ENCODE measurements at regions of chr16 and their contacts with region 1.

Region 1: DNA sequence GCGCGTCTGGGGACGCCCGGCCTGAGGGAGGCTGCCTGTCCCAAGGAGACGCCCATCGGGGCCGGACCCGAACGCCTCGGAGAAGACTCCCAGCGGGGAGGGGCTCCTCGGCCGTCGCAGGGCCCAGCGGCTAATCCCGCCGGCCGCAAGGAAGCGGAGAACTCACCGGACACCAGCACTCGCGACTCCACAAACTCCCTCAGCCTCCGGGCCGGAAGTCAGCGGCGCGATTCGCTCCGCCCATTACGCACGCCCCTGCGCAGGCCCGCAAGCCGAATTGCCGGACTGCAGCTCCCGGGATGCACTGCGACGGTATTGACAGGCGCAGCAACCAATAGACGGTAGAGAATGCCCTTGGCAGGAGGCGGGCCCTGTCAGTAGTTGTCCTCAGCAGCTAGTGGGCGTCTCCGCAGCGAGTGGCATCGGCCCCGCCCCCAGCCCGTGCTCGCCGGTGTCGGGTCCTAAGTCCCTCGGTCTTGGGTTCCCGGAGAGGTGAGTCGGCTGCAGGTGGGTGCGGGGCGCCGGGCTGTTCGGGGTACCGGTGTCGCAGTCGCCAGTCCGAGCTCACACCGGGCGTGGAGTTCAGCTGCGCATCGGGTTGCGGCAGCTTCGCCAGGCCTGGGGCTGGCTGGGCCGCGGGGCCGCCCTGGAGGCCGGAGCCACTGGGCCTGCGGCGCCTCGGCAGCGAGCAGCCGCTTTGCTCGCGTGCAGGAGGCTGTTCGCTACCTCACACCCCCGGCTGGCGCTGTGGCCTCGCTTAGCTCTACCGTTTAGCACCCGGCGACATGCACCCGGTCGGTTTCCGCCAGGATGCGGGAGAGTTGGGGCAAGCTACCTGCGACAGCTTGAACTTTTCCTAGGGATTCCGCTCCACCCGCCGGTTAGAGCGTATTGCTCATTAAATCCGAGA is at the starts of genes ZNF174 and ZSCAN32:
- DNase-seq: peak; percentile 98 to 99 (median 99)
- ATAC-seq: peak; percentile 100
- H3K4me3 ChIP-seq: peak within 1 kb of the TSS; percentile 39 to 99 (median 90)
- H3K27ac ChIP-seq: peak within 1 kb of the TSS; percentile 22 to 93 (median 86)
- H3K4me1 ChIP-seq: peaks cover 0 to 33% (median 18%) of the 10 kb centered on the region in 12 donors
- H3K27me3 ChIP-seq: no peaks in the 10 kb centered on the region
- CTCF ChIP-seq: peak in 3 of 12 donors; percentile 13 to 44 (median 16)
- POLR2A ChIP-seq: peak in 1 of 2 donors; percentile 76
- total RNA-seq, gene ZNF174: 8.4 to 21.0 (median 10.6) TPM
- total RNA-seq, gene ZSCAN32: 5.4 to 9.5 (median 7.5) TPM

Region 2: DNA sequence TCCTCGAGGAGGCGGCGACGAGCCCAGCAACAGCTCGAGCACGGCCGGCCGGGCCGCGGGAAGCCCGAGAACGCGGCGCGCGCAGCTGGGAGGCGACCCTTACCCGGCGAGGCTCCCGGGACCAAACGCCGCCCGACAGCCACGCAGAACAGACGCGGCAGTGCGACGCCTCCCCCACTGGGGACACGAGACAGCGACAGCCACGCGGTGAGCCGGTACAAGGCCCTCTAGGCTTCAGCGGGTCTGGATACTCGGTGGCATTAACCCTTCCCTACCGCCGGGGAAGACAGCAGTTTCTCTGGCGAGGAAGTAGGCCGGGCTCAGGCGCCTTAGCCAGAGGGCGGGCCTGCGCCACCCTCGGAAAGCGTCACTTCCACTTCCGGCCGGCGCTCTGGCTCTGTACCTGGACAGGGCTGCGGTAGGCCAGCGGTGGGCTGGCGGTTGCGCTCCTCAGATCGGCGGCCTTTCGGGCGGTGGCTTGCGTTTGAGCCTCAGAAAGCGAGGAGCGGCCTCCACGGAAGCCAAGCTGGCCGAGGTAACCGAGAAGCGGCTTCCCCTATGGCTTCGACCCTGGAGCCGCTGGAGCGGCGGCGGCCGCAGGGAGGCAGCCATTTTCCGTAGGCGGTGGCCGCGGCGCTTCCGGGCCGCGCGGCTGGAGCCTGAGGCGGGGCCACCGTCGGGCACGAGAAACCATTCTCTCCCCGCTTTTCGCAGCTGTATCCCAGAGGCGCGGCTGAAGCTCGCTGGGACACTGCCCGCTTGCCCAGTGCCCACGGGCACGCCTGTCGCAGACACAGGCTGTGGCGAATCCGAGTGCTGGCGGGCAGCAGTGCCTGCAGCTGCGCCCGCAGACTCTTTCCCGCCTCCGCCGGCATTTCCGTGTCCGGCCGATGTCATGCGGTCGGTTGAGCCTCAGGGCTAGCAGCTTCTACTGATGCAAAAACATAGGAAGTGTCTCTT is 95.6 kb before region 1 on chr16 and contains the starts of genes TIGD7 and ZNF75A:
- intact Hi-C with region 1: loop called in 1 of 10 experiments (anchors 5 kb)
- DNase-seq: peak; percentile 89 to 93 (median 92)
- ATAC-seq: peak; percentile 98 to 100 (median 99)
- H3K4me3 ChIP-seq: peak within 1 kb of the TSS; percentile 52 to 92 (median 73)
- H3K27ac ChIP-seq: peak within 1 kb of the TSS; percentile 74 to 98 (median 94)
- H3K4me1 ChIP-seq: peaks cover 0 to 25% (median 18%) of the 10 kb centered on the region in 12 donors
- H3K27me3 ChIP-seq: no peaks in the 10 kb centered on the region
- CTCF ChIP-seq: peak in 7 of 12 donors; percentile 5 to 45 (median 23)
- POLR2A ChIP-seq: peak in 1 of 2 donors; percentile 80
- total RNA-seq, gene TIGD7: 4.6 to 10.4 (median 8.2) TPM
- total RNA-seq, gene ZNF75A: 13.3 to 27.3 (median 18.1) TPM

Region 3: GRCh38 chr16:3364774-3365427 is 36.1 kb before region 1 on chr16:
- intact Hi-C with region 1: loop called in 1 of 10 experiments (anchors 2 kb)
- DNase-seq: peak; percentile 87 to 97 (median 92)
- ATAC-seq: peak; percentile 99 to 100 (median 99)
- H3K4me3 ChIP-seq: peak overlapping the region; percentile 40 to 90 (median 62)
- H3K27ac ChIP-seq: peak overlapping the region; percentile 79 to 94 (median 88)
- H3K4me1 ChIP-seq: peaks cover 0 to 8% (median 0%) of the 10 kb centered on the region in 12 donors
- H3K27me3 ChIP-seq: peaks cover 0 to 9% (median 0%) of the 10 kb centered on the region in 9 donors
- CTCF ChIP-seq: no peak
- POLR2A ChIP-seq: peak in 1 of 2 donors; percentile 41

Region 4: DNA sequence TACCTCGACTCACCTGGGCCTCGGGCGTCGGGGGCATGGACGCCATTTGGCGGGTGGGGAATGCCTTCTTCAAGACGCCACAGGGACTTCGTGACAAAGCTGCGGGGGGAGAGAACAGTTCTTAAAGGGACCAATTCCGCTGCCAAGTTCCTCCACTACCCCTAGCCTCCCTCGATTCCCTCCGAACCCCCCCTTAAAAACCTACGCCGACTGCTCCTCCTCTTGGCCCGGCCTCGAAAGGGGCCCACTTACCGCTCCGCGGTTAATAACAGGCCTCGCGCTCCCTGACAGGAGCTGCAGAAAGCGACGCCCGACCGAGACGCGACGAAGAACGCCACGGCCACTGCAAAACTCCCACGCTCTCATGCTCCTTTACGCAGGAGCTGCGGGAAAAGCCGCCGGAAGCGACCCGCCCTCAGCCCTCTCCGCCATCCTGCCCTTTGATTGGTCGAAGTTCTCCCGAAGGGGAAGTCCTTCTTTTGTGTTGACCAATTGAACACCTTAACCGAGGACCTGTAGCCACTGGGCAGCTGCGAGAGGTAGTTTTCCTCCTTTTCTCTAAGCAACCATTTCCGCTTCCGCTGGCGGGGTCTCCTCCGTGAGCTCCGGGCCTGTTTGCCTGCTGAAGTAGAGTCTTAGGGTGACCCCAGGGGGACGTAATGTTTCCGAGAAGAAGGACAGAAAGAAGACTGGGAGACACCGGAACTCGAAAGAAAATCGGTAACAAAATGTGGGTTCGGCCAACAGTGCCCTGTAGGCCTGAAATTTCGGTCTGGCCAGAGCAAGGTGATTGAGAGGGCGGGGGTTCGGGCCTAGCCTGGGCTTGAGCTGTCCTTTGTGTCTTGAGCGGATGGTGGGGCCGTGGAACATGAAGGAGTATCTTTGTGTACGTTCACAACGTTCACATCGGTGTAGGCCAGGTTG is 42.3 kb after region 1 on chr16 and contains the starts of genes NAA60 and ZNF597:
- intact Hi-C with region 1: loop called in 2 of 10 experiments (anchors 2 to 5 kb)
- DNase-seq: peak; percentile 85 to 88 (median 87)
- ATAC-seq: peak; percentile 98 to 99 (median 98)
- H3K4me3 ChIP-seq: peak within 1 kb of the TSS; percentile 49 to 86 (median 66)
- H3K27ac ChIP-seq: peak within 1 kb of the TSS; percentile 73 to 91 (median 83)
- H3K4me1 ChIP-seq: peaks cover 0 to 25% (median 9%) of the 10 kb centered on the region in 12 donors
- H3K27me3 ChIP-seq: no peaks in the 10 kb centered on the region
- CTCF ChIP-seq: no peak
- POLR2A ChIP-seq: peak in 1 of 2 donors; percentile 25
- total RNA-seq, gene NAA60: 30.3 to 61.9 (median 37.0) TPM
- total RNA-seq, gene ZNF597: 1.5 to 3.3 (median 1.8) TPM

Region 5: GRCh38 chr16:3457434-3458252 is 56.6 kb after region 1 on chr16:
- intact Hi-C with region 1: loop called in 9 of 10 experiments (anchors 1 to 10 kb)
- DNase-seq: peak; percentile 91 to 95 (median 93)
- ATAC-seq: peak; percentile 69 to 94 (median 90)
- H3K4me3 ChIP-seq: peak overlapping the region; percentile 74 to 99 (median 80)
- H3K27ac ChIP-seq: peak overlapping the region; percentile 94 to 99 (median 98)
- H3K4me1 ChIP-seq: peaks cover 16 to 64% (median 57%) of the 10 kb centered on the region in 12 donors
- H3K27me3 ChIP-seq: no peaks in the 10 kb centered on the region
- CTCF ChIP-seq: peak in 11 of 12 donors; percentile 24 to 64 (median 50)
- POLR2A ChIP-seq: peak in 1 of 2 donors; percentile 56

Region 6: GRCh38 chr16:3503523-3503922 is 102.5 kb after region 1 on chr16:
- intact Hi-C with region 1: loop called in 5 of 10 experiments (anchors 1 to 10 kb)
- DNase-seq: no peak
- ATAC-seq: no peak
- H3K4me3 ChIP-seq: no peak overlapping the region
- H3K27ac ChIP-seq: peak overlapping the region in 1 of 12 donors; percentile 74
- H3K4me1 ChIP-seq: peaks cover 4 to 37% (median 14%) of the 10 kb centered on the region in 12 donors
- H3K27me3 ChIP-seq: no peaks in the 10 kb centered on the region
- CTCF ChIP-seq: no peak
- POLR2A ChIP-seq: no peak

Region 7: DNA sequence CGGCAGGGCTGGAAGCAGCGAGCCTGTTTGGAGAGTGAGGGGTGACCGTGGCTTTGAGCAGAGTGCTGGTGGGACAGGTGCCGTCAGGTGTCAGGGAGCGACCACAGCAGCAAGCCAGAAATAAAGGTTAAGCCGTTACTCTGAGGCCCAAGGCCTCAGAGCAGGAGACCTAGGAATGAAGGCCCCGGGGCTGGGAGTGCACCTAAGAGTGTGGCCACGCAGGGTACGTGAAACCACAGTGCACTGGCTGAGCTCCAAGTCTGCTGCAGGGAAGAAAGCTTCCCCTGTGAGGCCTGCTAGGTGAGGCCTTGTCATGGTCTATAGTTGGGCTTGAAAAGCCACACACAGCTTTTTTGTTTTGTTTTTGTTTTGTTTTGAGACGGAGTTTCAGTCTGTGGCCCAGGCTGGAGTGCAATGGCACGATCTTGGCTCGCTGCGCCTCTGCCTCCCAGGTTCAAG is 108.5 kb after region 1 on chr16:
- intact Hi-C with region 1: loop called in 2 of 10 experiments (anchors 10 kb)
- DNase-seq: no peak
- ATAC-seq: no peak
- H3K4me3 ChIP-seq: no peak overlapping the region
- H3K27ac ChIP-seq: peak overlapping the region in 1 of 12 donors; percentile 42
- H3K4me1 ChIP-seq: peaks cover 0 to 10% (median 0%) of the 10 kb centered on the region in 12 donors
- H3K27me3 ChIP-seq: no peaks in the 10 kb centered on the region
- CTCF ChIP-seq: no peak
- POLR2A ChIP-seq: no peak

Measured in heart left ventricle (tissue), 16 donors.